Naive thymus-derived CD4-positive, alpha-beta T cell (primary cell): ENCODE measurements at regions of chrX and their contacts with region 1.

Region 1: GRCh38 chrX:74015379-74016019 is 288.5 kb upstream of the ZCCHC13 start:
- DNase-seq: peak; percentile 12 to 81 (median 55)
- ATAC-seq: peak; percentile 77
- H3K4me3 ChIP-seq: no peak overlapping the region
- H3K4me3 Mint-ChIP-seq: no peak overlapping the region
- H3K27ac ChIP-seq: no peak overlapping the region
- H3K27ac Mint-ChIP-seq: peak overlapping the region in 2 of 9 donors; percentile 18 to 37
- H3K4me1 ChIP-seq: no peaks in the 10 kb centered on the region
- H3K4me1 Mint-ChIP-seq: peaks cover 0 to 7% (median 3%) of the 10 kb centered on the region in 7 donors
- H3K27me3 ChIP-seq: no peaks in the 10 kb centered on the region
- H3K27me3 Mint-ChIP-seq: no peaks in the 10 kb centered on the region

Region 2: DNA sequence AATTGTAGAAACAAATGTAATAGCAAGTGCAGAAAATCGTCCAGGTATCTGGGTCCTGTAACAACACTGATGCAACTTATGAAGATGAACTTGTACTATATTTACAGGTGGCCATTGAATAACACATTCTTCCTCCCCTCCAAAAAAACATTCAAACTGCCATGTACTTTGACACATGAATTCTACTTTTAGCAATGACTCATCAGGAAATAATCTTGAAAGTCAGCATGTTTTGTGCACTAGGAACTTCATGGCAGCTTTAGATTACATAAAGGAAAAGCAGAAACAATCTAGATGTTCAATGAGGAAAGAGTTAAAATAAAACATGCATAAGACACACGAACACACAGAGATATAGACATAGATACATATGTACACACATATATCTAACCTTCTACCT is 938.7 kb before region 1 on chrX:
- CTCF ChIA-PET with region 1: no interaction called
- POLR2A ChIA-PET with region 1: no interaction called
- intact Hi-C with region 1: loop called in 1 of 2 experiments (anchors 10 kb)
- DNase-seq: no peak
- ATAC-seq: no peak
- H3K4me3 ChIP-seq: no peak overlapping the region
- H3K4me3 Mint-ChIP-seq: no peak overlapping the region
- H3K27ac ChIP-seq: no peak overlapping the region
- H3K27ac Mint-ChIP-seq: no peak overlapping the region
- H3K4me1 ChIP-seq: no peaks in the 10 kb centered on the region
- H3K4me1 Mint-ChIP-seq: no peaks in the 10 kb centered on the region
- H3K27me3 ChIP-seq: no peaks in the 10 kb centered on the region
- H3K27me3 Mint-ChIP-seq: peaks cover 9 to 25% (median 20%) of the 10 kb centered on the region in 5 donors

Region 3: GRCh38 chrX:73855546-73855945 is 160.0 kb before region 1 on chrX:
- CTCF ChIA-PET with region 1: interaction called, 16 read pairs
- POLR2A ChIA-PET with region 1: no interaction called
- intact Hi-C with region 1: loop called (anchors 1 kb)
- DNase-seq: peak; percentile 11 to 81 (median 59)
- ATAC-seq: peak; percentile 64
- H3K4me3 ChIP-seq: no peak overlapping the region
- H3K4me3 Mint-ChIP-seq: no peak overlapping the region
- H3K27ac ChIP-seq: no peak overlapping the region
- H3K27ac Mint-ChIP-seq: no peak overlapping the region
- H3K4me1 ChIP-seq: no peaks in the 10 kb centered on the region
- H3K4me1 Mint-ChIP-seq: peaks cover 0 to 4% (median 0%) of the 10 kb centered on the region in 7 donors
- H3K27me3 ChIP-seq: no peaks in the 10 kb centered on the region
- H3K27me3 Mint-ChIP-seq: no peaks in the 10 kb centered on the region

Region 4: GRCh38 chrX:73977534-73978169 is 37.8 kb before region 1 on chrX:
- CTCF ChIA-PET with region 1: no interaction called
- POLR2A ChIA-PET with region 1: no interaction called
- intact Hi-C with region 1: loop called in 1 of 2 experiments (anchors 5 kb)
- DNase-seq: peak in 7 of 9 donors; percentile 51 to 82 (median 69)
- ATAC-seq: peak; percentile 94
- H3K4me3 ChIP-seq: no peak overlapping the region
- H3K4me3 Mint-ChIP-seq: peak overlapping the region; percentile 18 to 71 (median 55)
- H3K27ac ChIP-seq: peak overlapping the region; percentile 68
- H3K27ac Mint-ChIP-seq: peak overlapping the region; percentile 66 to 92 (median 85)
- H3K4me1 ChIP-seq: peaks cover 13 to 19% of the 10 kb centered on the region in 2 donors
- H3K4me1 Mint-ChIP-seq: peaks cover 17 to 90% (median 64%) of the 10 kb centered on the region in 7 donors
- H3K27me3 ChIP-seq: no peaks in the 10 kb centered on the region
- H3K27me3 Mint-ChIP-seq: no peaks in the 10 kb centered on the region

Region 5: GRCh38 chrX:74343343-74344279 is 328.1 kb after region 1 on chrX:
- CTCF ChIA-PET with region 1: no interaction called
- POLR2A ChIA-PET with region 1: no interaction called
- intact Hi-C with region 1: loop called (anchors 1 to 2 kb)
- DNase-seq: peak in 8 of 9 donors; percentile 17 to 59 (median 44)
- ATAC-seq: peak; percentile 82
- H3K4me3 ChIP-seq: no peak overlapping the region
- H3K4me3 Mint-ChIP-seq: no peak overlapping the region
- H3K27ac ChIP-seq: no peak overlapping the region
- H3K27ac Mint-ChIP-seq: peak overlapping the region in 1 of 9 donors; percentile 37
- H3K4me1 ChIP-seq: no peaks in the 10 kb centered on the region
- H3K4me1 Mint-ChIP-seq: peaks cover 0 to 5% (median 3%) of the 10 kb centered on the region in 7 donors
- H3K27me3 ChIP-seq: no peaks in the 10 kb centered on the region
- H3K27me3 Mint-ChIP-seq: peaks cover 0 to 4% (median 4%) of the 10 kb centered on the region in 5 donors